ENCODE measurements at regions of chr11 and their contacts with region 1.

Region 1: GRCh38 chr11:60899046-60899936 is 7.1 kb downstream of the PRPF19 start:
- DNase-seq: no peak
- H3K4me3 ChIP-seq: no peak overlapping the region
- CTCF ChIP-seq: peak; percentile 84

Region 2: GRCh38 chr11:60821827-60822599 is 77.3 kb before region 1 on chr11:
- CTCF ChIA-PET with region 1: interaction called, 1,087 read pairs
- POLR2A ChIA-PET with region 1: no interaction called
- DNase-seq: no peak
- H3K4me3 ChIP-seq: no peak overlapping the region
- CTCF ChIP-seq: no peak

Region 3: GRCh38 chr11:60866911-60867870 is 32.1 kb before region 1 on chr11 and contains the start of gene ZP1:
- CTCF ChIA-PET with region 1: interaction called, 20 read pairs
- POLR2A ChIA-PET with region 1: no interaction called
- DNase-seq: no peak
- H3K4me3 ChIP-seq: no peak within 1 kb of the TSS
- CTCF ChIP-seq: no peak

Region 4: DNA sequence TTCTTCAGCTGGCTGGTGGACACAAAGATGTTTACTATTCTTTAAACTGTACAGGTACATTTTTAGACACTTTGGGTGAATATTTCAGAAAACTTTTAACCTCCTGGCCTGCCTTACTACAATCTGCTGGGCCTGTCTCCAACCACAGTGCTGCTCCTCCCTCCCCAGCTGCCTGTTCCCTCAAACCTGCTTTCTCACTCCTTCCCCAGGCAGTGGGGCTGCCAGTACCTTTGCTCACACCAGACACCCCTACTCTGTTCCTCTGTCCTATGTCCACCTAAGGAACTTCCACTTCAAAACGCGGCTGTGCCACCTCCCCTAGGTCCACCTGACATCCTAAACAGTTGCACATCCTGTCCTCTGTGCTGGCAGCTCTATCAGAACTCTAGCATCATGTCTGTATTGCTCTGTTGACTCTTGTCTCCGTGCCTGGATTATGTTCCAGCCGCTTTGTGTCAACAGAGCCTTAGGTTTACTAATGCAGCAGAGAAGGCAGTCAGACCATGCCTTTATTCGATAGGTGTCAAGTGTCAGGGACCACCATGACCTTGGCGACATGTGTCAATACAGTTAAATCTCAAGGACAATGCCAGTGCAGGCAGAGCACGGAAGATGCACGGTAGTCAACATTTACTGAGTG is 18.5 kb before region 1 on chr11:
- CTCF ChIA-PET with region 1: interaction called, 14 read pairs
- POLR2A ChIA-PET with region 1: no interaction called
- DNase-seq: no peak
- H3K4me3 ChIP-seq: no peak overlapping the region
- CTCF ChIP-seq: no peak

Region 5: DNA sequence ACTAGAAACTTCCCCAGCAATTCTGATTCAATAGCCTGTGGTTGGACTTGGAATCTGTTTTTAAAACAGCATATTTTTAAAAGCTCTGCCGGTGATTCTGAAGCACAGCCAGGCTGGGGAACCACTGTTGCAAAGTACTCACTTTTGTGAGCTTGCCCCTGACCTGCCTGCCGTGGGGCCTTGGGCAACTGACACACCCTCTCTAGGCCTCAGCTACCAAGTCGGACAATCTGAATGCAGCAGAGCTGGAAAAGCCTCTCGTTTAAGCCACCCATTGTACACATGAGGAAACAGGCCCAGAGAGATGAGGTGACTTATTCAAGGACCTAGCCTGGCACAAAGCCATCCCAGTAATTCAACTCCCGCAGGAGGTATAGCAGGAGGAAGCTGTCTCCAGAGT is 43.8 kb after region 1 on chr11:
- CTCF ChIA-PET with region 1: no interaction called
- POLR2A ChIA-PET with region 1: no interaction called
- DNase-seq: no peak
- H3K4me3 ChIP-seq: no peak overlapping the region
- CTCF ChIP-seq: no peak

Region 6: GRCh38 chr11:61187505-61188130 is 288.3 kb after region 1 on chr11:
- CTCF ChIA-PET with region 1: interaction called, 10 read pairs
- POLR2A ChIA-PET with region 1: no interaction called
- DNase-seq: no peak
- H3K4me3 ChIP-seq: no peak overlapping the region
- CTCF ChIP-seq: peak; percentile 86

Region 7: GRCh38 chr11:61201476-61201875 is 302.2 kb after region 1 on chr11:
- CTCF ChIA-PET with region 1: no interaction called
- POLR2A ChIA-PET with region 1: no interaction called
- DNase-seq: no peak
- H3K4me3 ChIP-seq: no peak overlapping the region
- CTCF ChIP-seq: no peak

Region 8: DNA sequence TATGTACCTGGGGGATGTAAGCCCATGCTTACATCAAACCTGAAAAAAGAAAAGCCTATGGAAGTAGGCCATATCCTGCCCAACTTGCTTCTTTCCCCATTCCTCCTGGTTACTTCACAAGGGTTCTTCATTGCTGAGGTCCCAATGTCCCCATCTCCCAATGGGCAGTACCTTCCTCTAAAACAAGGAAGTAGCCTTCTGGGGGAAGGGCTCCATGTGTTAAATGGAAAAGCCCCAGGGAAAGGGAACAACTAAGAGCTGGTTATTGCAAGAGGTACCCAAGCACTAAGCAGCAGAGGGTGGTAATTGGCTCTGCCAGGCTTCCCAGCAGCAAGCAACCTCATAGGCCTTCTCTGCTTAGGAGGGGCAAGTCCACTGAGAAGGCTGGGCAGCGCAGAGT is 504.4 kb after region 1 on chr11:
- CTCF ChIA-PET with region 1: no interaction called
- POLR2A ChIA-PET with region 1: no interaction called
- DNase-seq: no peak
- H3K4me3 ChIP-seq: no peak overlapping the region
- CTCF ChIP-seq: no peak

Region 9: GRCh38 chr11:61507962-61508824 is 608.9 kb after region 1 on chr11 and contains the start of gene LRRC10B:
- CTCF ChIA-PET with region 1: no interaction called
- POLR2A ChIA-PET with region 1: no interaction called
- DNase-seq: no peak
- H3K4me3 ChIP-seq: peak within 1 kb of the TSS; percentile 24
- CTCF ChIP-seq: no peak